ENCODE measurements at regions of chr3 and their contacts with region 1.

Region 1: GRCh38 chr3:121995161-121996137 is 26.6 kb downstream of the ILDR1 start:
- DNase-seq: peak; percentile 61
- ATAC-seq: peak; percentile 57
- H3K4me3 Mint-ChIP-seq: no peak overlapping the region
- H3K27ac Mint-ChIP-seq: peak overlapping the region; percentile 13
- H3K4me1 Mint-ChIP-seq: peaks cover 48% of the 10 kb centered on the region
- H3K27me3 Mint-ChIP-seq: no peaks in the 10 kb centered on the region

Region 2: DNA sequence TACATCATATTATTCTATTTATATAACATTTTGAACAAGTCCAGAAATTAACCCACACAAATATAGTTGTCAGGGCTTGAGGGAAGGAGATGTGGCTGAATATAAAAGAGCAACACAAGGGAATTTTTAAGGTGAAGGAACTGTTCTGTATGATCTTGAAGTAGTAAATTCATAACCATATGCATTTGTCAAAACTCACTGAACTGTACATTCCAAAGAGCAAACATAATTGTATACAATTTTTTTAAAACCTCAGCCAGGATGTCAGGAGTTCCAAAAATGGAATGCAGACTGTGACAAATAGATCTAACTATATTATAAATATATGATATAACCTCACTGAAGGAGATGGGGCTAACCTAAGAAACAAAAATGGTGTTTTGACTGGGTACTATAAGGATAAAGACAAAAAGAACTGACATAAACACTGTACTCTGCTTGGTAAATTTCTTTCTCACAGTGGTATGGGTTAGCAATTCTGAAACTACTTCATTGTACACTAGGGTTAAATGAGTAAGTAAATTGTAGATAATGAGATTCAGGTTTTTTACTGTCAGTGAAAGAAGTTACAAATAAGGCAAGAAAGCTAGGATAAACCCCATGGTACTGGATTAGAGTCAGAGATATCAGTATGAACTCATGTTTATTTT is 260.3 kb before region 1 on chr3:
- CTCF ChIA-PET with region 1: no interaction called
- DNase-seq: no peak
- ATAC-seq: peak; percentile 94
- H3K4me3 Mint-ChIP-seq: no peak overlapping the region
- H3K27ac Mint-ChIP-seq: peak overlapping the region; percentile 54
- H3K4me1 Mint-ChIP-seq: peaks cover 41% of the 10 kb centered on the region
- H3K27me3 Mint-ChIP-seq: no peaks in the 10 kb centered on the region

Region 3: GRCh38 chr3:121894301-121894990 is 101.0 kb before region 1 on chr3 and contains the start of gene SLC15A2:
- CTCF ChIA-PET with region 1: no interaction called
- DNase-seq: no peak
- ATAC-seq: no peak
- H3K4me3 Mint-ChIP-seq: no peak within 1 kb of the TSS
- H3K27ac Mint-ChIP-seq: no peak within 1 kb of the TSS
- H3K4me1 Mint-ChIP-seq: no peaks in the 10 kb centered on the region
- H3K27me3 Mint-ChIP-seq: no peaks in the 10 kb centered on the region
- total RNA-seq, gene SLC15A2: 2.4 to 4.8 TPM

Region 4: GRCh38 chr3:121957674-121958415 is 37.6 kb before region 1 on chr3:
- CTCF ChIA-PET with region 1: no interaction called
- DNase-seq: no peak
- ATAC-seq: no peak
- H3K4me3 Mint-ChIP-seq: no peak overlapping the region
- H3K27ac Mint-ChIP-seq: no peak overlapping the region
- H3K4me1 Mint-ChIP-seq: no peaks in the 10 kb centered on the region
- H3K27me3 Mint-ChIP-seq: peaks cover 13% of the 10 kb centered on the region

Region 5: GRCh38 chr3:122067214-122067550 is 71.7 kb after region 1 on chr3:
- CTCF ChIA-PET with region 1: interaction called, 10 read pairs
- DNase-seq: no peak
- ATAC-seq: peak; percentile 27
- H3K4me3 Mint-ChIP-seq: peak overlapping the region; percentile 75
- H3K27ac Mint-ChIP-seq: peak overlapping the region; percentile 89
- H3K4me1 Mint-ChIP-seq: peaks cover 55% of the 10 kb centered on the region
- H3K27me3 Mint-ChIP-seq: no peaks in the 10 kb centered on the region

Measured in activated CD8-positive, alpha-beta memory T cell treated with anti-CD3 and anti-CD28 coated beads, Interleukin-2, amount 10 ng/mL, durations not matched to agents 7 days and 5 days (primary cell).